ENCODE measurements at regions of chr19 and their contacts with region 1.

Region 1: DNA sequence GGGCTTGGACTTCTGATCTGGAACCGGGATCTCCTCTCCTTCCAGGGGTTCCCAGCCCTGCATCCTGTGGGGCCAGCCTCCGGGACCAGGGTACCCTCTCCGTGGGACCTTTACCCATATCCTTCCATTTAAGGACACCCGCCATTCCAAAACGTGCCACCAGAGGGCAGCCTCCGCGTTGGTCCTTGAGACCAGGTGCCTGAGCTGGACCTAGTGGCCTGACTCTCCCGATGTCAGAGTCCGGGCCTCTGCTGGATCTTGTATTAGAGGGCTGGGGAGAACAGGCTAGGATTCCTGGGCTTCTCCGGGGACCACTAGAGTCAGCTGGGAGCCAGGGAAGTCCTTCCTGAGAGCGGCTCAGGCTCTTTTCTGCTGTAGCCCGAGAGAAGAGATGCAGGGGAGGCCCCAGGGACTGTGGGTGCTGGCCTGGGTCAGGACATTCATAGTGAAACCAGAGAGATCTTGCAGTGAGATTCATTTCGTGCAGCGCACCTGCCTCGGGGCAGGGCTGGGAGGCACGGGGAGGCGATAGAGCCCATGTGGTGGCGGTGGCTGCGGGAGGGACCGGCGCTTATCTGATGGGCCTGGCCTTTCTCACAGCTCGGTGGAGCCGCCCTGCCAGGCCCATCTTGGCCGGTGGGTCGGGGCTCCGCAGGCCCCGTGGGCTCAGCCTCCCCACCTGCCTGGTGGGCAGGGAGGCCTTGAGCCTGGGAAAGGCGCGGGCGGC is 9.8 kb upstream of the SLC7A10 start:
- DNase-seq: peak; percentile 37 to 82 (median 53)
- ATAC-seq: peak; percentile 70
- H3K4me3 ChIP-seq: no peak overlapping the region
- H3K4me3 Mint-ChIP-seq: no peak overlapping the region
- H3K27ac ChIP-seq: no peak overlapping the region
- H3K27ac Mint-ChIP-seq: no peak overlapping the region
- H3K4me1 ChIP-seq: peaks cover 0 to 12% of the 10 kb centered on the region in 2 donors
- H3K4me1 Mint-ChIP-seq: peaks cover 0 to 4% (median 0%) of the 10 kb centered on the region in 7 donors
- H3K27me3 ChIP-seq: no peaks in the 10 kb centered on the region
- H3K27me3 Mint-ChIP-seq: peaks cover 4 to 11% (median 7%) of the 10 kb centered on the region in 5 donors

Region 2: GRCh38 chr19:33125929-33126388 is 109.5 kb before region 1 on chr19:
- CTCF ChIA-PET with region 1: no interaction called
- POLR2A ChIA-PET with region 1: no interaction called
- intact Hi-C with region 1: loop called in 1 of 2 experiments (anchors 5 kb)
- DNase-seq: peak; percentile 14 to 68 (median 55)
- ATAC-seq: peak; percentile 96
- H3K4me3 ChIP-seq: no peak overlapping the region
- H3K4me3 Mint-ChIP-seq: no peak overlapping the region
- H3K27ac ChIP-seq: no peak overlapping the region
- H3K27ac Mint-ChIP-seq: peak overlapping the region in 4 of 9 donors; percentile 34 to 71 (median 60)
- H3K4me1 ChIP-seq: no peaks in the 10 kb centered on the region
- H3K4me1 Mint-ChIP-seq: peaks cover 0 to 9% (median 7%) of the 10 kb centered on the region in 7 donors
- H3K27me3 ChIP-seq: no peaks in the 10 kb centered on the region
- H3K27me3 Mint-ChIP-seq: no peaks in the 10 kb centered on the region

Region 3: DNA sequence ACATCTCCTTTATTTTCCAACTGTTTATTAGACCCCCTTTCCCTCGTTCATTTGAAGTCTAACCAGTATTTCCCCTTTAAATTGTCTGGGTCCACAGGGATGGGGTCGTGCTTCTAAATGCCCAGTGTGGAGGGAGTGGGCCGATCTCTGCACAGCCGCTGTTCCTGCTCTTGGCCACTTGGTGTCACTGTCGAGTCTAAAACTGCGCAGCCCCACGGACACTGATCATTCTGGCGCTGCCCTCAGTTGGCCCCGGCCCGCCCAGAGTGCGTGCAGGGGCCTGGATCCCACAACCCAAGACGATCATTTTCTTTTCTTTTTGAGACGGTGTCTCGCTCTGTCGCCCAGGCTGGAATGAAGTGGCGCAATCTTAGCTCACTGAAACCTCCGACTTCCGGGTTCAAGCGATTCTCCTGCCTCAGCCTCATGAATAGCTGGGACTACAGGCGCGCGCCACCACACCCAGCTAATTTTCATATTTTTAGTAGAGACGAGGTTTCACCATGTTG is 91.5 kb before region 1 on chr19:
- CTCF ChIA-PET with region 1: interaction called, 4 read pairs
- POLR2A ChIA-PET with region 1: no interaction called
- intact Hi-C with region 1: loop called (anchors 1 to 2 kb)
- DNase-seq: peak; percentile 21 to 68 (median 49)
- ATAC-seq: peak; percentile 98
- H3K4me3 ChIP-seq: no peak overlapping the region
- H3K4me3 Mint-ChIP-seq: peak overlapping the region in 6 of 10 donors; percentile 0 to 58 (median 30)
- H3K27ac ChIP-seq: no peak overlapping the region
- H3K27ac Mint-ChIP-seq: no peak overlapping the region
- H3K4me1 ChIP-seq: no peaks in the 10 kb centered on the region
- H3K4me1 Mint-ChIP-seq: peaks cover 4 to 9% (median 8%) of the 10 kb centered on the region in 7 donors
- H3K27me3 ChIP-seq: no peaks in the 10 kb centered on the region
- H3K27me3 Mint-ChIP-seq: peaks cover 0 to 8% (median 3%) of the 10 kb centered on the region in 5 donors

Region 4: GRCh38 chr19:33302175-33302973 is 66.9 kb after region 1 on chr19 and contains the start of gene CEBPA:
- CTCF ChIA-PET with region 1: no interaction called
- POLR2A ChIA-PET with region 1: no interaction called
- intact Hi-C with region 1: loop called in 1 of 2 experiments (anchors 10 kb)
- DNase-seq: peak in 3 of 9 donors; percentile 9 to 76 (median 67)
- ATAC-seq: peak; percentile 91
- H3K4me3 ChIP-seq: peak within 1 kb of the TSS; percentile 43
- H3K4me3 Mint-ChIP-seq: peak within 1 kb of the TSS in 7 of 10 donors; percentile 29 to 78 (median 68)
- H3K27ac ChIP-seq: no peak within 1 kb of the TSS
- H3K27ac Mint-ChIP-seq: no peak within 1 kb of the TSS
- H3K4me1 ChIP-seq: no peaks in the 10 kb centered on the region
- H3K4me1 Mint-ChIP-seq: peaks cover 0 to 6% (median 4%) of the 10 kb centered on the region in 7 donors
- H3K27me3 ChIP-seq: no peaks in the 10 kb centered on the region
- H3K27me3 Mint-ChIP-seq: peaks cover 14 to 52% (median 35%) of the 10 kb centered on the region in 5 donors
- total RNA-seq, gene CEBPA: 0.22 to 26.2 (median 1.9) TPM

Region 5: DNA sequence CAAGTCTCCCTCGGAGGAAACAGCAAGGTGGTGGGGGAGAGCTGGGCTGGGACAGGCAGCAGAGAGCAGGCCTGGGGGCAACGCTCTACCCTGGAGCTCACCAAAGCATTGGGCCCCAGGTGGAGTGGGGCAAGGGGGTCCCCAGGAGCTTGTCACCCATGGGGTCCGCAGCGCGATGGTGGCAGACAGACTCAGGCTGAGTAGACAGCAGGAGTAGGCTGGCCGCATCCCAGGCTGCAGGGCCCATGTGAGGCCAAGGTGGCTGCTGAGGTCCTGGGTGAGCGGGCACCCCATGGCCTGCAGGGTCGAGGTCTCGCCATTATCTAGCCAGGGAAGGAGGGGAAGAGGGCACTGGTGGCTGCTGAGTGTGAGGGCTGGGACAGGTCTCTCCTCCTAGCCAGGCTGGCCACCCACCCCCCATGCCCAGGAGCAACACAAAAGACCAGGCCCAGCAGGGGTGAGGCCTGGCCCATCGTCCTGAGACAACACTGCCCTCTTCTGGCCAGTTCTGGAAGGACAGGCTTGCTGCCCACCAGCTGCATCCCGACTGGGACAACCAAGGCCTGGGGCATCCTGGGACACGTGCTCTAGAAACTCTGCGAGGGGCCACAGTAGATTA is 171.2 kb after region 1 on chr19:
- CTCF ChIA-PET with region 1: interaction called, 34 read pairs
- POLR2A ChIA-PET with region 1: no interaction called
- intact Hi-C with region 1: loop called (anchors 1 kb)
- DNase-seq: peak; percentile 37 to 80 (median 63)
- ATAC-seq: peak; percentile 86
- H3K4me3 ChIP-seq: no peak overlapping the region
- H3K4me3 Mint-ChIP-seq: no peak overlapping the region
- H3K27ac ChIP-seq: no peak overlapping the region
- H3K27ac Mint-ChIP-seq: no peak overlapping the region
- H3K4me1 ChIP-seq: no peaks in the 10 kb centered on the region
- H3K4me1 Mint-ChIP-seq: peaks cover 0 to 3% (median 0%) of the 10 kb centered on the region in 7 donors
- H3K27me3 ChIP-seq: no peaks in the 10 kb centered on the region
- H3K27me3 Mint-ChIP-seq: no peaks in the 10 kb centered on the region

Region 6: GRCh38 chr19:33771384-33772101 is 536.1 kb after region 1 on chr19:
- CTCF ChIA-PET with region 1: no interaction called
- POLR2A ChIA-PET with region 1: no interaction called
- intact Hi-C with region 1: loop called (anchors 1 to 5 kb)
- DNase-seq: peak in 7 of 9 donors; percentile 35 to 68 (median 40)
- ATAC-seq: peak; percentile 60
- H3K4me3 ChIP-seq: no peak overlapping the region
- H3K4me3 Mint-ChIP-seq: no peak overlapping the region
- H3K27ac ChIP-seq: no peak overlapping the region
- H3K27ac Mint-ChIP-seq: no peak overlapping the region
- H3K4me1 ChIP-seq: no peaks in the 10 kb centered on the region
- H3K4me1 Mint-ChIP-seq: no peaks in the 10 kb centered on the region
- H3K27me3 ChIP-seq: no peaks in the 10 kb centered on the region
- H3K27me3 Mint-ChIP-seq: peaks cover 0 to 24% (median 22%) of the 10 kb centered on the region in 5 donors

Measured in naive thymus-derived CD4-positive, alpha-beta T cell (primary cell).